Naive thymus-derived CD4-positive, alpha-beta T cell (primary cell): ENCODE measurements at regions of chr12 and their contacts with region 1.

Region 1: DNA sequence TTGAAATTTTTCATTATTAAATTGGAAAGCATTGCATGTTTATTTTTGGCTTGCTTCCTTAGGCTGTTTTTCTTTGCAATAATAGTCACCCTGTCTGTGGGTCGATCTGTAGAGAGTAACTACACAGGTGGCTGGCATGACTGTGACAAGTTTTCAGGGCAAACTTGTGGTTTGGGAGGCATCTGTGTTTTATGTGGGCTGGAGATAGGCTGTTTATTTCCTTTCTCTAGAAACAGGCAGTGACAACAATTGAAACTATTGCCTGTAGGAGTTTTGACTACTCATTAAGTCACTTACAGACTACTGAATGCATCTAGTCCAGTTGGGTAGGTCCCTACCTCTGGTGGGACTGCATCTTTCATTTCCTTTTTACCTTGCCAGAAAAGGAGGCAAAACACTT is 155.6 kb downstream of the DYRK2 start:
- DNase-seq: peak in 8 of 9 donors; percentile 29 to 87 (median 62)
- ATAC-seq: peak; percentile 93
- H3K4me3 ChIP-seq: no peak overlapping the region
- H3K4me3 Mint-ChIP-seq: no peak overlapping the region
- H3K27ac ChIP-seq: no peak overlapping the region
- H3K27ac Mint-ChIP-seq: no peak overlapping the region
- H3K4me1 ChIP-seq: peaks cover 18 to 28% of the 10 kb centered on the region in 2 donors
- H3K4me1 Mint-ChIP-seq: peaks cover 4 to 24% (median 7%) of the 10 kb centered on the region in 7 donors
- H3K27me3 ChIP-seq: no peaks in the 10 kb centered on the region
- H3K27me3 Mint-ChIP-seq: peaks cover 0 to under 1% (median 0%) of the 10 kb centered on the region in 5 donors

Region 2: GRCh38 chr12:67698672-67699581 is 105.2 kb before region 1 on chr12:
- CTCF ChIA-PET with region 1: no interaction called
- POLR2A ChIA-PET with region 1: no interaction called
- intact Hi-C with region 1: loop called (anchors 5 kb)
- DNase-seq: peak in 8 of 9 donors; percentile 26 to 55 (median 44)
- ATAC-seq: peak; percentile 82
- H3K4me3 ChIP-seq: peak overlapping the region; percentile 39
- H3K4me3 Mint-ChIP-seq: peak overlapping the region; percentile 71 to 86 (median 82)
- H3K27ac ChIP-seq: peak overlapping the region; percentile 62
- H3K27ac Mint-ChIP-seq: peak overlapping the region; percentile 58 to 91 (median 73)
- H3K4me1 ChIP-seq: peaks cover 20 to 24% of the 10 kb centered on the region in 2 donors
- H3K4me1 Mint-ChIP-seq: peaks cover 28 to 74% (median 60%) of the 10 kb centered on the region in 7 donors
- H3K27me3 ChIP-seq: no peaks in the 10 kb centered on the region
- H3K27me3 Mint-ChIP-seq: peaks cover 0 to 58% (median 0%) of the 10 kb centered on the region in 5 donors

Region 3: GRCh38 chr12:67783393-67783792 is 20.8 kb before region 1 on chr12:
- CTCF ChIA-PET with region 1: no interaction called
- POLR2A ChIA-PET with region 1: interaction called, 3 read pairs
- intact Hi-C with region 1: loop called in 1 of 2 experiments (anchors 1 kb)
- DNase-seq: no peak
- ATAC-seq: no peak
- H3K4me3 ChIP-seq: no peak overlapping the region
- H3K4me3 Mint-ChIP-seq: peak overlapping the region in 8 of 10 donors; percentile 10 to 69 (median 38)
- H3K27ac ChIP-seq: no peak overlapping the region
- H3K27ac Mint-ChIP-seq: peak overlapping the region in 8 of 9 donors; percentile 1 to 80 (median 24)
- H3K4me1 ChIP-seq: peaks cover 0 to 13% of the 10 kb centered on the region in 2 donors
- H3K4me1 Mint-ChIP-seq: peaks cover 6 to 43% (median 36%) of the 10 kb centered on the region in 7 donors
- H3K27me3 ChIP-seq: no peaks in the 10 kb centered on the region
- H3K27me3 Mint-ChIP-seq: no peaks in the 10 kb centered on the region

Region 4: GRCh38 chr12:67884596-67884995 is 80.4 kb after region 1 on chr12:
- CTCF ChIA-PET with region 1: no interaction called
- POLR2A ChIA-PET with region 1: no interaction called
- intact Hi-C with region 1: loop called in 1 of 2 experiments (anchors 5 kb)
- DNase-seq: no peak
- ATAC-seq: no peak
- H3K4me3 ChIP-seq: no peak overlapping the region
- H3K4me3 Mint-ChIP-seq: no peak overlapping the region
- H3K27ac ChIP-seq: no peak overlapping the region
- H3K27ac Mint-ChIP-seq: no peak overlapping the region
- H3K4me1 ChIP-seq: no peaks in the 10 kb centered on the region
- H3K4me1 Mint-ChIP-seq: peaks cover 0 to 4% (median 0%) of the 10 kb centered on the region in 7 donors
- H3K27me3 ChIP-seq: no peaks in the 10 kb centered on the region
- H3K27me3 Mint-ChIP-seq: peaks cover 0 to 4% (median 0%) of the 10 kb centered on the region in 5 donors